Naive thymus-derived CD4-positive, alpha-beta T cell (primary cell): ENCODE measurements at regions of chr1 and their contacts with region 1.

Region 1: DNA sequence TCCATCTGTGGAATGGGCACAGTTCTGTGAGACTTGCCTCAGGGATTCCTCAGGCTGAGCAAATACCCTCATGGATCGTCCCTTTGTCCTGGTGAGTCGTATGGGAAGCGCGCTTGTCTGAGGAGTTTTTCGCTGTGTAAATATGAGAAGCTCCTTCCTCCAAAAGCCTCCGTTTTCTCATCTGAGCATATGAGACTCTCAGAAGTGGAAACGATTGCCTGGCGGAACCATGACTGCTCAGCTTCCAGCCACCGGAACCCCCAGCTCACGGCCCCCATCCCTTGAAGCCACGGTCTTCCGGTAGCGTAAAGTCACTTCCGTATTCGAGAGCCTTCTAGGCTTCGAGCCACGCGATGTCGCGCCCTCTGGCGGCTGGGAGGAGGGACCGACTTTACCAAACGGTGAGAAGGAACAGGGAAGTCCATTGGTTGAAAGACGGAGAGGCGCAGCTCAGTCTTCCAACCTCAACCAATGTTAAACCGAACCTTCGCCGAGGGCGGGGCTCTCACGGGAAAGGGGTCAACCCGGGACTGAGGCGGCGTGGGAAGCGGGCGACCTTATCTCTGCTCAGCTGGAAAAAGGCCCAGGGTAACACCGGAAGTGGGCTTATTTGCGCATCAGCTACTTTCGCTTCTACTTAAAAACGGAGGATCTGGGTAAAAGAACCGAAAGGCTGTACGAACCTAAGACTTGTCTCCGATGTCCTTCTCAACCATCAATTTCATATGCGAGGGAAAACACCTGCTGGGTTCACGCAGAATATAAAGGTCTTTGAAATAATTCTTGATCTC is 46.2 kb downstream of the AZIN2 start:
- DNase-seq: peak; percentile 93 to 99 (median 98)
- ATAC-seq: peak; percentile 95
- H3K4me3 ChIP-seq: peak overlapping the region; percentile 95
- H3K4me3 Mint-ChIP-seq: peak overlapping the region; percentile 87 to 99 (median 93)
- H3K27ac ChIP-seq: peak overlapping the region; percentile 88
- H3K27ac Mint-ChIP-seq: peak overlapping the region; percentile 91 to 99 (median 96)
- H3K4me1 ChIP-seq: peaks cover 19 to 28% of the 10 kb centered on the region in 2 donors
- H3K4me1 Mint-ChIP-seq: peaks cover 24 to 60% (median 52%) of the 10 kb centered on the region in 7 donors
- H3K27me3 ChIP-seq: no peaks in the 10 kb centered on the region
- H3K27me3 Mint-ChIP-seq: peaks cover 0 to 3% (median 0%) of the 10 kb centered on the region in 5 donors

Region 2: GRCh38 chr1:31315902-31316301 is 1811.3 kb before region 1 on chr1:
- CTCF ChIA-PET with region 1: no interaction called
- POLR2A ChIA-PET with region 1: no interaction called
- intact Hi-C with region 1: no loop called
- DNase-seq: no peak
- ATAC-seq: no peak
- H3K4me3 ChIP-seq: no peak overlapping the region
- H3K4me3 Mint-ChIP-seq: no peak overlapping the region
- H3K27ac ChIP-seq: no peak overlapping the region
- H3K27ac Mint-ChIP-seq: no peak overlapping the region
- H3K4me1 ChIP-seq: no peaks in the 10 kb centered on the region
- H3K4me1 Mint-ChIP-seq: peaks cover 0 to 5% (median 0%) of the 10 kb centered on the region in 7 donors
- H3K27me3 ChIP-seq: no peaks in the 10 kb centered on the region
- H3K27me3 Mint-ChIP-seq: no peaks in the 10 kb centered on the region

Region 3: DNA sequence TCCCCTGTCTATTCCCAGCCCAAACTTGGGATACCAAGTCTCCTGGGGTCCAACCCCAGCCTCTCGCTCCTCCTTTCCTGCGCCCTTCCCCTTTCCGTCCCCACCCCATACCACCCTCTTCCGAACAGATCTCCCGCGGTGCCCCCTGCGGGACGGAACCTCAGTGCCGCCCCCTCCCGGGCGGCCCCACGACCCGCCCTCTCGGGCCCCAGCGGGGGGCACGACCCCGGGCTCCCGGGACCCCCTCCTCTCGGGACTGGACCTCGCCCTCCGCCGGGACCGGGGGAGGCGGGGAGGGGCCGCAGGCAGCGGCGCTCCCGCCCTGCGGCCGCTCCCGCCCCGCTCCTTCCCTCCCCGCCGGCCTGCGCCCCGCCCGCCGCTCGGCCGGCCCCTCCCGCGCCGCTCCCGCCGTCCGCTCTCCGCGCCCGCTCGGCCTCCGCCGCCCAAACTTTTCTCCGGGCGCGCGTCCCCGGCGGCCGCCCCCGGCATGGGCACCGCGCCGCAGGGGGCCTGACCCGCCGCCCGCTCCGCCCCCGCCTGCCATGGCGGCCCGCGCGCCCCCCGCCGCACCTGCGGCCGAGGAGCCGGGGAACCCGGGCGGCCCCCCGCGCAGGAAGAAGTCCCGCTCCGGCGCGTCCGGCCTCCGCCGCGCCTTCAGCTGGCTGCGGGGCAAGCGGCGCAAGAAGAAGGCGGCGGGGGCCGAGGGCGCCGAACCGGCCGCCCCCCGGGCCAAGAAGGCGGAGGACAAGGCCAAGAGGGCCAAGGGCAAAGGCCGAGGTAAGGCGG is 385.6 kb before region 1 on chr1:
- CTCF ChIA-PET with region 1: no interaction called
- POLR2A ChIA-PET with region 1: no interaction called
- intact Hi-C with region 1: no loop called
- DNase-seq: peak in 1 of 9 donors; percentile 29
- ATAC-seq: peak; percentile 54
- H3K4me3 ChIP-seq: no peak overlapping the region
- H3K4me3 Mint-ChIP-seq: peak overlapping the region in 9 of 10 donors; percentile 50 to 80 (median 68)
- H3K27ac ChIP-seq: no peak overlapping the region
- H3K27ac Mint-ChIP-seq: no peak overlapping the region
- H3K4me1 ChIP-seq: no peaks in the 10 kb centered on the region
- H3K4me1 Mint-ChIP-seq: peaks cover 0 to 3% (median 0%) of the 10 kb centered on the region in 7 donors
- H3K27me3 ChIP-seq: peaks cover 0 to 17% of the 10 kb centered on the region in 2 donors
- H3K27me3 Mint-ChIP-seq: peaks cover 3 to 56% (median 18%) of the 10 kb centered on the region in 5 donors

Region 4: DNA sequence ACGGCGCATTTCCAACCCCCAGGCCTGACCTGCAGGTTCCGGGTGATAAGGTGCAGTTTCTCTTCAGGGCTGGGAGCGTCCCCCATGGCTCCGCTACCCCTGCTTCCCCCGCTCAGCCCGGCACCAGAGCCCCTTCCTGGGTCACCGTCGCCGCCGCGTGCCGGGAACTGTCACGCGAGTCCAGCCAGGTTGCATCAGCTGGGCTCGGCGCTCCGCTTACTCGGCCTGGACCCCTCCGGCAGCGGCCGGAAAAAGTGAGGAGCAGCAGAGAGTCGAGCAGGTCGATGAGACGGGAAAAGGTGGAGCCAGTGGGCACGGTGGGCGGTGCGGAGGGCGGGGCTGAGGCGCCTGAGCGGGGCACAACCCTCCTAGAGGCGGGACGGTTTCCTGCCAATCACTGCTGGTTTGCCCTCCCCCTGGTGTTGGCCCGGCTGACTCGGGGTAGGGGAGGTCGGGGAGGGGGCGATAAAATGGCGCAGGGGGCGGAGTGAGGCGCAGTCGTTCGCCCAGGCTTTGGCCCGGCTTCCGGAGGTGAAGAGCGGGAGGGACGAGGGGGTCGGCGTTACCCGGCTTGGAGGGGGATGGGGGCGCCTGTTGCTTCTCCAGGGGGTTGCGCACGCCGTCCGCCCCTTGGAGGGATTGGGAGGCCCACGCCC is 309.9 kb before region 1 on chr1 and contains the starts of genes S100PBP and YARS1:
- CTCF ChIA-PET with region 1: no interaction called
- POLR2A ChIA-PET with region 1: interaction called, 5 read pairs
- intact Hi-C with region 1: loop called (anchors 1 kb)
- DNase-seq: peak; percentile 98 to 100 (median 99)
- ATAC-seq: peak; percentile 99
- H3K4me3 ChIP-seq: peak within 1 kb of the TSS; percentile 86
- H3K4me3 Mint-ChIP-seq: peak within 1 kb of the TSS; percentile 85 to 99 (median 96)
- H3K27ac ChIP-seq: peak within 1 kb of the TSS; percentile 85
- H3K27ac Mint-ChIP-seq: peak within 1 kb of the TSS; percentile 82 to 96 (median 92)
- H3K4me1 ChIP-seq: peaks cover 26 to 36% of the 10 kb centered on the region in 2 donors
- H3K4me1 Mint-ChIP-seq: peaks cover 35 to 72% (median 59%) of the 10 kb centered on the region in 7 donors
- H3K27me3 ChIP-seq: no peaks in the 10 kb centered on the region
- H3K27me3 Mint-ChIP-seq: no peaks in the 10 kb centered on the region
- total RNA-seq, gene S100PBP: 36.3 to 69.0 (median 60.2) TPM
- total RNA-seq, gene YARS1: 70.2 to 175 (median 86.8) TPM

Region 5: GRCh38 chr1:32981003-32981901 is 145.9 kb before region 1 on chr1:
- CTCF ChIA-PET with region 1: interaction called, 4 read pairs
- POLR2A ChIA-PET with region 1: interaction called, 8 read pairs
- intact Hi-C with region 1: loop called in 1 of 2 experiments (anchors 1 kb)
- DNase-seq: peak in 8 of 9 donors; percentile 51 to 73 (median 63)
- ATAC-seq: peak; percentile 95
- H3K4me3 ChIP-seq: peak overlapping the region; percentile 49
- H3K4me3 Mint-ChIP-seq: peak overlapping the region; percentile 65 to 93 (median 82)
- H3K27ac ChIP-seq: peak overlapping the region; percentile 84
- H3K27ac Mint-ChIP-seq: peak overlapping the region; percentile 91 to 99 (median 94)
- H3K4me1 ChIP-seq: peaks cover 11 to 26% of the 10 kb centered on the region in 2 donors
- H3K4me1 Mint-ChIP-seq: peaks cover 12 to 74% (median 26%) of the 10 kb centered on the region in 7 donors
- H3K27me3 ChIP-seq: no peaks in the 10 kb centered on the region
- H3K27me3 Mint-ChIP-seq: no peaks in the 10 kb centered on the region

Region 6: DNA sequence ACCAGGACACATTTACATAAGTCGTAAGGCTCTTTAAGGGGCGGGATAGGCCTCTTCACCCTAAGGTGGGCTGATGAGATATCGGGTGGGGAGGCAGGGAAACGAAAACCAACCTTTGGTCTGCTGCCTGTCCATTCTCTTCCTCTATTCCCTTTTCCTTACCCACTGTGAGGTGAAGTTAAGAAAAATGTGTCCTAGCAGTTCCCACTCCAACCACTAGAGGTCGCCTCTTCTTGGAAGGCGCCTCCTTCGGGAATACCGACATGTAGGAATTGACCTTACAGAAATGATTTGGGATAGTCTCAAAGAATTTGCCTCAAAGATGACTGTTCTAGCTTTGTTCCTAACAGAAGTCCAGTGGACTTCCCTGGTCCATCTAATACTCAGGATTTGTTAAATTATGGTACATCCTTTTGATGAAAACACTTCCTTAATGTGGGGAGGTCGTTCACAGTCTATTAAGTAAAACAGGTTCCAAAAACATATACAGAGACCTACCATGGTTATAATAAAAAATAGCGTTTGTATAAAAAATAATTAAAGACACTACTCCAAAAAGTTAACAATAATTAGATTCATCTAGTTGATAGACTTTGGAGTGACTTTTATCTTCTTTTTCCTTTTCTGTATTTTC is 32.1 kb before region 1 on chr1:
- CTCF ChIA-PET with region 1: interaction called, 13 read pairs
- POLR2A ChIA-PET with region 1: interaction called, 14 read pairs
- intact Hi-C with region 1: loop called (anchors 1 kb)
- DNase-seq: no peak
- ATAC-seq: no peak
- H3K4me3 ChIP-seq: no peak overlapping the region
- H3K4me3 Mint-ChIP-seq: no peak overlapping the region
- H3K27ac ChIP-seq: no peak overlapping the region
- H3K27ac Mint-ChIP-seq: peak overlapping the region in 1 of 9 donors; percentile 24
- H3K4me1 ChIP-seq: peaks cover 28 to 29% of the 10 kb centered on the region in 2 donors
- H3K4me1 Mint-ChIP-seq: peaks cover 27 to 70% (median 46%) of the 10 kb centered on the region in 7 donors
- H3K27me3 ChIP-seq: no peaks in the 10 kb centered on the region
- H3K27me3 Mint-ChIP-seq: no peaks in the 10 kb centered on the region

Region 7: GRCh38 chr1:33181921-33182341 is 54.7 kb after region 1 on chr1 and contains the start of gene TRIM62:
- CTCF ChIA-PET with region 1: interaction called, 10 read pairs
- POLR2A ChIA-PET with region 1: interaction called, 27 read pairs
- intact Hi-C with region 1: loop called (anchors 1 kb)
- DNase-seq: peak; percentile 57 to 80 (median 73)
- ATAC-seq: peak; percentile 85
- H3K4me3 ChIP-seq: peak within 1 kb of the TSS; percentile 78
- H3K4me3 Mint-ChIP-seq: peak within 1 kb of the TSS; percentile 84 to 95 (median 89)
- H3K27ac ChIP-seq: peak within 1 kb of the TSS; percentile 64
- H3K27ac Mint-ChIP-seq: peak within 1 kb of the TSS; percentile 47 to 89 (median 79)
- H3K4me1 ChIP-seq: peaks cover 8 to 12% of the 10 kb centered on the region in 2 donors
- H3K4me1 Mint-ChIP-seq: peaks cover 22 to 35% (median 31%) of the 10 kb centered on the region in 7 donors
- H3K27me3 ChIP-seq: no peaks in the 10 kb centered on the region
- H3K27me3 Mint-ChIP-seq: peaks cover 0 to 35% (median 7%) of the 10 kb centered on the region in 5 donors
- total RNA-seq, gene TRIM62: 13.2 to 24.2 (median 19.4) TPM

Region 8: GRCh38 chr1:33349778-33350610 is 222.8 kb after region 1 on chr1:
- CTCF ChIA-PET with region 1: no interaction called
- POLR2A ChIA-PET with region 1: no interaction called
- intact Hi-C with region 1: loop called (anchors 1 to 2 kb)
- DNase-seq: peak; percentile 64 to 85 (median 73)
- ATAC-seq: peak; percentile 93
- H3K4me3 ChIP-seq: peak overlapping the region; percentile 96
- H3K4me3 Mint-ChIP-seq: peak overlapping the region; percentile 89 to 95 (median 92)
- H3K27ac ChIP-seq: peak overlapping the region; percentile 69
- H3K27ac Mint-ChIP-seq: peak overlapping the region; percentile 54 to 91 (median 88)
- H3K4me1 ChIP-seq: peaks cover 23 to 25% of the 10 kb centered on the region in 2 donors
- H3K4me1 Mint-ChIP-seq: peaks cover 32 to 51% (median 46%) of the 10 kb centered on the region in 7 donors
- H3K27me3 ChIP-seq: no peaks in the 10 kb centered on the region
- H3K27me3 Mint-ChIP-seq: peaks cover 0 to 7% (median 0%) of the 10 kb centered on the region in 5 donors